Heart right ventricle (tissue), 16 donors: ENCODE measurements at regions of chr5 and their contacts with region 1.

Region 1: DNA sequence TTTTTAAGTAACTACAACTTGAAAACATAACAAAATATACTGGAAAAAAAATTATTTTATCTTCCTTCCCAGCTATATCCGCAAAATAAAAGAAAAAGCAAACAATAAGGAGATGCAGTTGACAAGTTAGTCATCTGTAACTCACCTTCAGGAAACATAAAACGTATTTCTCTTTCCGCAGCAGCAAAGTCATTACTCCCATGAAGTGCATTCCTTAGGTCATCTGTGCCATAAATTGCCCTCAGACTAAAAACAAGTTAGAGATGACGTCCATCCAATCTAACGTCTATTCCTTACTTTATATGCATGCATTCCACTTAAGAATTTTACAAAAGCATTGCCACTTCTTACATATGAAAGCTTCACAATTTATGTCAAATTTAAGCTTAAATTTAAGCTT is 10.9 kb downstream of the NME5 start:
- DNase-seq: no peak
- ATAC-seq: no peak
- H3K4me3 ChIP-seq: no peak overlapping the region
- H3K27ac ChIP-seq: no peak overlapping the region
- H3K4me1 ChIP-seq: peaks cover 0 to 7% (median 0%) of the 10 kb centered on the region in 9 donors
- H3K27me3 ChIP-seq: peaks cover 0 to 5% (median 0%) of the 10 kb centered on the region in 7 donors
- CTCF ChIP-seq: no peak

Region 2: DNA sequence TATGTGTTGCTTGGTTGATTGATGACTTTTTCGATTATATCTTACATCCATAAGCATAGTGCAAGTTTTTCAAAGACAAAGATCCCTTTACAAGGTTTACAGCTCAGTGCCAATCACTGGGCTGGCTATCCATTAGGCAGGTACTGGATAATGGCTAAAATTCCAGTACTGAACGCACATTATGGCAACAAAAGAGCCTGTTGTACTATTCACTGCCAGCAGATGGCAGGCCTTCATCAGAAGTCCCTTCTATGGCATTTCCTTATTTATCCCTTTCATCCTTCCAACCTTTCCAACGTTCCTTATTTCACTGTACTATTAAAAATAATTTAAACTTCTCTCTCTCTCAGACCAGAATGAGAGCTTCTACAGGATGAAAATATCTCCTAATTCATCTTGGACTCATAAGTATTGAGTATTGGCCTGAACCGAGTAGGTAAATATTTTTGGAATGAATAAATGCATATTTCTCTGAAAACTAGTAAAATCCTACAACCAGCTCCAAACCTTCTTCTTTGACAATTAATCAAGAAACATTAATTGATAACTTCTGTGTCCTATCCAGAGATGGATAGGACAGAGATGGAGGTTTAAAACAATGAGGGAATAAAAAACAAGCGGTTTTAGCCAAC is 51.2 kb before region 1 on chr5:
- intact Hi-C with region 1: loop called (anchors 1 to 5 kb)
- DNase-seq: peak in 1 of 2 donors; percentile 49
- ATAC-seq: peak in 6 of 8 donors; percentile 35 to 68 (median 62)
- H3K4me3 ChIP-seq: no peak overlapping the region
- H3K27ac ChIP-seq: no peak overlapping the region
- H3K4me1 ChIP-seq: no peaks in the 10 kb centered on the region
- H3K27me3 ChIP-seq: peaks cover 0 to 6% (median 0%) of the 10 kb centered on the region in 7 donors
- CTCF ChIP-seq: peak; percentile 50 to 93 (median 85)

Region 3: DNA sequence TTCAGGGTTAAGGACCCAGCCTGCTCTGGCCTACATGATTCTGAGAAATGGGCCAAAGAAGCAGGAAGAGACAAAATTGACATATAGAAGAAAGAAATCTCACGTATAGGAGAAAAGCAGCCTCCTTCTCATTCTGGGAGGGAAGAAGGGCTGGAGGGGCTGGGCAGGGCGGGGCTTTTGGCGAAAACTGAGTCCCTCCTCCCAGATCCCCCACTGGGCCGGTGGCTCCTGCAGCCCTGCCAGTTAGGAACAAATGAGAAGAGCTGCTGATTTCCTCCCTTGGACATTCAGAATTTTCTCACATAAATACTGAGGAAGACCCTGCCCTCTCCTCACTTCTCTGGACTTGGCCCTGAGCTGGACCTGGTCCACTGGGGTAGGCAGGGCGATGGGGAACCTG is 44.6 kb before region 1 on chr5 and contains the start of gene WNT8A:
- intact Hi-C with region 1: loop called in 6 of 10 experiments (anchors 2 to 5 kb)
- DNase-seq: no peak
- ATAC-seq: no peak
- H3K4me3 ChIP-seq: no peak within 1 kb of the TSS
- H3K27ac ChIP-seq: no peak within 1 kb of the TSS
- H3K4me1 ChIP-seq: no peaks in the 10 kb centered on the region
- H3K27me3 ChIP-seq: peaks cover 0 to 2% (median 0%) of the 10 kb centered on the region in 7 donors
- CTCF ChIP-seq: no peak
- total RNA-seq, gene WNT8A: not detected

Region 4: DNA sequence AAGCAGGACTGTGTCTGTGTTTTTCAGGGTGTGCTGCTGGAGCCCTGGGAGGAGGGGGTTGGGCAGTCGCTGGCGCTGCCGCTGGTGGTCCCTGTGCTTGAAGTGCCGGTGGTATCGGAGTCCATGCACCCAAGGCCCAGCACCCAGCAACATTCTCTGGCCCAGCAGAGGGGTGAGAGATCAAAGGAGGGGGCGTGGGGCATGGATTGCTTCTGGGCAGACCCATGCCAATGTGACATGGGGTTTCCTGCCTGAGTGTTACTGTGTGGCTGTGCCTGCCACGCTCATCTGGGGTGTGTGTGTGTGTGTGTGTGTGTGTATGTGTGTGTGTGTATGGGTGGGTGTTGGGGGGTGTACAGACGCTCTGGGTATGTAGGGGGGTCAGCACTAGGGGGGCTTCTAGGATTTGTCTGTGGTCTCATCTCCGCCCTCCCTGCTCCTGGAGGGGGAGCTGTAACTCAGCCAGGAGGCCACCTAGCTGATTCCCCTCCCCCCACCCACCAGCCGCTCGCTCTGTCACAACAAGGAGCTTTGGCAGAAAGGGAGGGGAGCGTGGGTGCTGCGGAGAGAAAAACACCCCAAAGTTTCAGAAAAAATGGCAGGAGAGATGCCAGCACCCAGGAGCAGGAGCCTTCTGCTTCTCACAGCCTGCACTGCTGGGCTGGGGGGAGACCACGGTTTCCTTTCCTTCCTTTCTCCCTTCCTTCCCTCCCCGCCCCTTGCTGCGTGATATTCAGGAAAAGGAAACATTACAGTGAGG is 482.8 kb after region 1 on chr5:
- intact Hi-C with region 1: no loop called
- DNase-seq: no peak
- ATAC-seq: peak; percentile 28 to 85 (median 70)
- H3K4me3 ChIP-seq: peak overlapping the region in 9 of 10 donors; percentile 24 to 56 (median 48)
- H3K27ac ChIP-seq: peak overlapping the region in 7 of 10 donors; percentile 6 to 65 (median 41)
- H3K4me1 ChIP-seq: peaks cover 0 to 22% (median 7%) of the 10 kb centered on the region in 9 donors
- H3K27me3 ChIP-seq: peaks cover 0 to 14% (median 0%) of the 10 kb centered on the region in 7 donors
- CTCF ChIP-seq: peak in 1 of 9 donors; percentile 22

Region 5: DNA sequence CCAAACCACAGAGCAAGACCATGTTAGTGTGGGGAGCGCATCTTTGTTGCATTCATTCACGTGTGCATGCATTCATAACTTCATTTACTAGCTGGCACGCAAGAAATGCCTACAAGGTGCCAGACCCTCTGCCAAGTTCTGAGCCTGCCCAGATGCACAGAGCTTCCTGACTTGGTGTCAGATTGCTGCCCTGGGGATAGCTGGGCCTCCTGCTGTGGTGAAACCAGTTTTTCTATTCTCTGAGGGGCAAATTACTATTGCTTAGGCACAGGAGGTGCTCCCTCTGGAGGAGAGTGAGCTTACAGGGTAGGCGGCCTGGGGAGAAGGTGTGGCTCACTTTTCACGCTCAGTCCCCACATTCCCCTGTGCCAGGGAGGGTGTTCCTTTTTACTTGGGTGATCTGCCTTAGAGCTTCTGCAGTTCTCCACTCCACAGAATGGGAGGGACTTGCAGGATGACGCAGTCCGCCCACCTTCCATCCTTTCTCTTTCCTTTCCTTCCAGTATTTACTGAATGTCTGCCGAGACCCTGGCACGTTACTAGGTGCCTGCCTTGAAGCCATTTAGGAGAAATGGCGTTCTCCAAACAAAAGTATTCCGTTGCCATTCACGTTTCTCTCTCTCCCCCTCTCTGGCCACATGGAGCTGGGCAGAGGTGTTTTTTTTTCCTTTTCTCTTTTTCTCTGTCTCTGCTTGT is 597.0 kb after region 1 on chr5:
- intact Hi-C with region 1: no loop called
- DNase-seq: peak; percentile 27 to 57
- ATAC-seq: peak; percentile 39 to 74 (median 72)
- H3K4me3 ChIP-seq: peak overlapping the region in 1 of 10 donors; percentile 6
- H3K27ac ChIP-seq: peak overlapping the region; percentile 5 to 74 (median 66)
- H3K4me1 ChIP-seq: peaks cover 6 to 32% (median 16%) of the 10 kb centered on the region in 9 donors
- H3K27me3 ChIP-seq: peaks cover 0 to 7% (median 0%) of the 10 kb centered on the region in 7 donors
- CTCF ChIP-seq: peak in 6 of 9 donors; percentile 6 to 42 (median 26)